ENCODE measurements at regions of chr4 and their contacts with region 1.

Region 1: DNA sequence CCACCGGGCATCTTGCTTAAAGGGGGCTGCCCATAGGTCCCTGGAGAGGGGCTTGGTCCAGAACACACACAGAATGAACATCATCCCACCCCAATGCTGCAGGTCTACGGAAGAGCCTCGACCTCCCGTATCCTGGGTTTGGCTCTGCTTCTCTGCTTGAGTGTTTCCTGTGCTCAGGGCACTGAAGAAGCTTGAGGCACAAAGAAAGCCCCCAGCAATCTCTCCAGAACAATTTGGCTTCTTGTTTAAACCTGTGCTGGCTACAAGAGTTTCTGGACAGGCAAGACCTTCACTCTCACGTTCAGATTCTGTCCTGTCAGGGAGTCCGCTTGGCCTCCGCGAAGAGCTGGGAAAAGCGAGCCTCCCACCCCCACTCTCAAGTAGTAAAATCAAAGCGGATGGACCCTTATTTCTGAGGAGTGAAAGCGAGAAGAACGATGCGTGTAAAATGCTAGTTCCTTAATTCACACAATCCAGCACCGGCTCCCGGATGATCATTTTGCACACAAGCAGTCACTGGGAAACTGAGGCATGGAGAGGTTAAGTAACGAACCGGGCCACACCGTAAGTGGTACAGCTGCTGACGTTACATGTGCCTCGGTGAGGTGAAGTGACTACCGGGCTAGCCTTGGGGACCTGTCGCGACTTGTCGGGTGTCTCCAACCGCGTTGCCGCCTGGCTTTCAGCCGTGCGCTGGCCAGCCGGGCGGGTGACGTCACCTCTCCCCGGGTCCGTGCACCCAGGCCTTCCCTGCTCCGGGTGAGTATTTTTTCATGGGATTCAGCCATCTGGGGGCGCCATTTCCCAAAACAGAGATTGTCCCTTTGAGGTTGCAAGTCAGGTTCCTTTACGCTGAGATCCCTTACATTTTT is 3.1 kb upstream of the SFRP2 start:
- DNase-seq: peak; percentile 93
- ATAC-seq: peak; percentile 13
- H3K4me3 Mint-ChIP-seq: peak overlapping the region; percentile 84
- H3K27ac Mint-ChIP-seq: peak overlapping the region; percentile 96
- H3K4me1 Mint-ChIP-seq: peaks cover 37% of the 10 kb centered on the region
- H3K27me3 Mint-ChIP-seq: no peaks in the 10 kb centered on the region; the same call in 1 of the 2 replicates
- CTCF ChIP-seq: 0 out of 2 replicates have a peak, but pooled peaks have one; percentile 61

Region 2: DNA sequence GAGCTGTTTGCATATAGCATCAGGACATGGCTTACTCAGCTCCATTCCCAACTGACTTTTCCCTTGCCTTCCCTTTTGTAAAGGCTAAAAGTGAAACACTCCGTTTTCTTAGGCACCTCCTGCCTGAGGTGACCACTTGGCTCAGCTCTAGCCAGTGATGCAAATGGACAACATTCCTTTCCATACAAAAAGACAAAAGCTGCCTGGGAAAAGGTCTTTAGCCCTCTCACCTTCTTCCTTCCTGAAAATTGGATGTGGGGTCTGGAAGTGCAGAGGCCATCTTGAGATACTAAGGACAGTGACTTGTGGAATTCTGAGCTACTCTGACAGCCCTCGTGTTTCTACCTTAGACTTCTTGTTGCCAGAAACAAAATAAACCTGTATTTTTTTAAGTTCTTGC is 24.6 kb after region 1 on chr4:
- CTCF ChIA-PET with region 1: interaction called, 15 read pairs
- POLR2A ChIA-PET with region 1: interaction called, 6 read pairs
- DNase-seq: no peak
- ATAC-seq: peak; percentile 96
- H3K4me3 Mint-ChIP-seq: no peak overlapping the region
- H3K27ac Mint-ChIP-seq: peak overlapping the region; percentile 8
- H3K4me1 Mint-ChIP-seq: peaks cover 31% of the 10 kb centered on the region
- H3K27me3 Mint-ChIP-seq: no peaks in the 10 kb centered on the region; the same call in 1 of the 2 replicates
- CTCF ChIP-seq: no peak

Region 3: DNA sequence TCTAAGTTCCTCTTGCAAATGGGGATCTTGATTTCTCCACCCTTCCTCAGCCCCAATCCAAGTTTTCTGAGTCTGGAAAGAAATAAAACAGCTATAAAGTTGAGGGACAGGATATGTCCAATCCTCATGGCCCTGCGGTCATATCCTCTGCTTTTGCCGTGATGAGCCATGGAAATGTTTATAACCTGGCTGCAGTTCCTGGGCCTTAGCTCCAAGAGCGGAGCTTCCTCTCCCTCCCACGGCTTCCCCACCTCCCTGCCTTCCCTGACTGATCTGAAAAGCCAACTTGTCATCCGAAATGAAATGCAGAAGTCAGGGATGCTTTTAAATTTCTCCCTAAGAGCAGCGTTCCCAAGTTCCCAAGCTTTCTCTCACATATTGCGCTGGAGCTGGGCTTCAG is 218.4 kb after region 1 on chr4:
- CTCF ChIA-PET with region 1: interaction called, 13 read pairs
- POLR2A ChIA-PET with region 1: no interaction called
- DNase-seq: no peak
- ATAC-seq: no peak
- H3K4me3 Mint-ChIP-seq: no peak overlapping the region
- H3K27ac Mint-ChIP-seq: no peak overlapping the region
- H3K4me1 Mint-ChIP-seq: peaks cover 13% of the 10 kb centered on the region
- H3K27me3 Mint-ChIP-seq: peaks cover 8% of the 10 kb centered on the region; the same call in 1 of the 2 replicates
- CTCF ChIP-seq: no peak

Region 4: GRCh38 chr4:154018659-154019058 is 226.7 kb after region 1 on chr4:
- CTCF ChIA-PET with region 1: interaction called, 47 read pairs
- POLR2A ChIA-PET with region 1: interaction called, 3 read pairs
- DNase-seq: peak; percentile 67
- ATAC-seq: peak; percentile 99
- H3K4me3 Mint-ChIP-seq: no peak overlapping the region
- H3K27ac Mint-ChIP-seq: no peak overlapping the region
- H3K4me1 Mint-ChIP-seq: peaks cover 17% of the 10 kb centered on the region
- H3K27me3 Mint-ChIP-seq: no peaks in the 10 kb centered on the region
- CTCF ChIP-seq: no peak

Region 5: GRCh38 chr4:154049457-154050181 is 257.6 kb after region 1 on chr4:
- CTCF ChIA-PET with region 1: interaction called, 11 read pairs
- POLR2A ChIA-PET with region 1: no interaction called
- DNase-seq: peak; percentile 59
- ATAC-seq: peak; percentile 97
- H3K4me3 Mint-ChIP-seq: no peak overlapping the region
- H3K27ac Mint-ChIP-seq: no peak overlapping the region
- H3K4me1 Mint-ChIP-seq: peaks cover 19% of the 10 kb centered on the region
- H3K27me3 Mint-ChIP-seq: no peaks in the 10 kb centered on the region; the same call in 1 of the 2 replicates
- CTCF ChIP-seq: no peak

Region 6: GRCh38 chr4:154082760-154083535 is 291.0 kb after region 1 on chr4:
- CTCF ChIA-PET with region 1: interaction called, 19 read pairs
- POLR2A ChIA-PET with region 1: interaction called, 3 read pairs
- DNase-seq: peak; percentile 58
- ATAC-seq: peak; percentile 100
- H3K4me3 Mint-ChIP-seq: no peak overlapping the region
- H3K27ac Mint-ChIP-seq: peak overlapping the region; percentile 10; the same call in 1 of the 2 replicates
- H3K4me1 Mint-ChIP-seq: peaks cover 13% of the 10 kb centered on the region
- H3K27me3 Mint-ChIP-seq: no peaks in the 10 kb centered on the region
- CTCF ChIP-seq: peak; percentile 59

Measured in WTC11 (cell line).